HCT116 (cell line): ENCODE measurements at regions of chr3 and their contacts with region 1.

Region 1: GRCh38 chr3:109532257-109533216 is 195.2 kb upstream of the DPPA4 start:
- DNase-seq: peak; percentile 72
- ATAC-seq: peak; percentile 95
- H3K4me3 ChIP-seq: no peak overlapping the region
- H3K27ac ChIP-seq: no peak overlapping the region
- H3K4me1 ChIP-seq: no peaks in the 10 kb centered on the region
- H3K27me3 ChIP-seq: no peaks in the 10 kb centered on the region
- CTCF ChIP-seq: peak; percentile 41 to 70 (median 69); a peak in 5 of 6 replicates
- POLR2A ChIP-seq: no peak
- RAD21 ChIP-seq: peak; percentile 84

Region 2: GRCh38 chr3:109851854-109852253 is 319.3 kb after region 1 on chr3:
- CTCF ChIA-PET with region 1: no interaction called
- POLR2A ChIA-PET with region 1: no interaction called
- RAD21 ChIA-PET with region 1: no interaction called
- intact Hi-C with region 1: no loop called
- DNase-seq: no peak
- ATAC-seq: no peak
- H3K4me3 ChIP-seq: no peak overlapping the region
- H3K27ac ChIP-seq: no peak overlapping the region
- H3K4me1 ChIP-seq: no peaks in the 10 kb centered on the region
- H3K27me3 ChIP-seq: no peaks in the 10 kb centered on the region
- CTCF ChIP-seq: no peak
- POLR2A ChIP-seq: no peak
- RAD21 ChIP-seq: no peak

Region 3: GRCh38 chr3:110314512-110315114 is 782.1 kb after region 1 on chr3:
- CTCF ChIA-PET with region 1: interaction called, 3 read pairs
- POLR2A ChIA-PET with region 1: no interaction called
- RAD21 ChIA-PET with region 1: interaction called in 1 of 2 experiments, 5 read pairs
- intact Hi-C with region 1: loop called (anchors 1 kb)
- DNase-seq: peak; percentile 72
- ATAC-seq: peak; percentile 88
- H3K4me3 ChIP-seq: no peak overlapping the region
- H3K27ac ChIP-seq: no peak overlapping the region
- H3K4me1 ChIP-seq: peaks cover 0 to 8% of the 10 kb centered on the region in 2 experiments; a peak in 1 of 4 replicates
- H3K27me3 ChIP-seq: no peaks in the 10 kb centered on the region
- CTCF ChIP-seq: peak; percentile 36 to 75 (median 74); a peak in 5 of 6 replicates
- POLR2A ChIP-seq: no peak
- RAD21 ChIP-seq: peak; percentile 67

Region 4: DNA sequence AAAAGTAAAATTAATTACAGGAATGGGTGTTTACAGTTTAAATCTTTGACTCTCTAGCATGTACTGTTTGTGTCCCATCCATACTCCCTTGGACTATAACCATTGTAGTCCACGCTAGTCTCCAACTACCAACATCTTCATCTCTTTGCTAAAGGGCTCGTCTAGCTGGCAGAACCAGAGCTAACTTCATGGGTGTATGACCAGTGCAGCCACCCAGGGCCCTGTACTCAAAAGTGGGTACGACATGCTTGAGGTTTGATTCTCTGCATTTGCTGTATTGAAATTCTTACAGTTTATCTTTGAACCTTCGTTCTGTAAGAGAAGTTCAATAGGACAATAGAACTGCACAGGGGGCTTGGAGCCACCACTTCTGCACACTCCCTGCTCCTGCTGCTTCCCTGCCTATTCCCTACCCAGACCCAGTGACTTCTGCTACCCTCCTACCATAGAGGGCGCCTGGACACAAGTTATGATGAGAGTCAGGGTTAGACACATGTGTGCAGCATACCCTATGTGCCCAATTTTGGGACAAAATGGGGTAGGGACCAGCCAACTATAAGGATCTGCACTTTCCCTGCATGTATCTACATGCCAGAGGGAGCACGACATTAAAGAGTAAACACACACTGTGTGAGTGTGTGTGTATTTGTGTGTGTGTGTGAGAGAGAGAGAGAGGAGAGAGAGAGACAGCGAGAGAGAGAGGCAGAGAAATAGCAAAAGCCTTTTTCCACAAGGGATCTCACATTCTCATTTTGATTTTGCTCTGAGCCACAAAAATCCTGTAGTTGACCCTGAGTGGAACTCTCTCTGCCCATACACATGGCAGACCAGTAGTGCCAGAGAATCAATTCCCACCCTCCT is 1480.1 kb after region 1 on chr3:
- CTCF ChIA-PET with region 1: no interaction called
- POLR2A ChIA-PET with region 1: no interaction called
- RAD21 ChIA-PET with region 1: no interaction called
- intact Hi-C with region 1: loop called (anchors 10 kb)
- DNase-seq: peak; percentile 39
- ATAC-seq: peak; percentile 100
- H3K4me3 ChIP-seq: no peak overlapping the region
- H3K27ac ChIP-seq: no peak overlapping the region
- H3K4me1 ChIP-seq: 0 out of 4 replicates have a peak, but pooled peaks cover 0 to 6% of the 10 kb centered on the region in 2 experiments
- H3K27me3 ChIP-seq: no peaks in the 10 kb centered on the region
- CTCF ChIP-seq: peak; percentile 39 to 58 (median 49); a peak in 5 of 6 replicates
- POLR2A ChIP-seq: no peak
- RAD21 ChIP-seq: peak; percentile 79

Region 5: GRCh38 chr3:111080413-111080812 is 1547.9 kb after region 1 on chr3:
- CTCF ChIA-PET with region 1: interaction called, 4 read pairs
- POLR2A ChIA-PET with region 1: no interaction called
- RAD21 ChIA-PET with region 1: no interaction called
- intact Hi-C with region 1: loop called (anchors 1 kb)
- DNase-seq: no peak
- ATAC-seq: no peak
- H3K4me3 ChIP-seq: no peak overlapping the region
- H3K27ac ChIP-seq: no peak overlapping the region
- H3K4me1 ChIP-seq: peaks cover 40 to 77% of the 10 kb centered on the region in 2 experiments; a peak in 3 of 4 replicates
- H3K27me3 ChIP-seq: no peaks in the 10 kb centered on the region
- CTCF ChIP-seq: peak; percentile 23 to 56 (median 48); a peak in 5 of 6 replicates
- POLR2A ChIP-seq: no peak
- RAD21 ChIP-seq: peak; percentile 65

Region 6: DNA sequence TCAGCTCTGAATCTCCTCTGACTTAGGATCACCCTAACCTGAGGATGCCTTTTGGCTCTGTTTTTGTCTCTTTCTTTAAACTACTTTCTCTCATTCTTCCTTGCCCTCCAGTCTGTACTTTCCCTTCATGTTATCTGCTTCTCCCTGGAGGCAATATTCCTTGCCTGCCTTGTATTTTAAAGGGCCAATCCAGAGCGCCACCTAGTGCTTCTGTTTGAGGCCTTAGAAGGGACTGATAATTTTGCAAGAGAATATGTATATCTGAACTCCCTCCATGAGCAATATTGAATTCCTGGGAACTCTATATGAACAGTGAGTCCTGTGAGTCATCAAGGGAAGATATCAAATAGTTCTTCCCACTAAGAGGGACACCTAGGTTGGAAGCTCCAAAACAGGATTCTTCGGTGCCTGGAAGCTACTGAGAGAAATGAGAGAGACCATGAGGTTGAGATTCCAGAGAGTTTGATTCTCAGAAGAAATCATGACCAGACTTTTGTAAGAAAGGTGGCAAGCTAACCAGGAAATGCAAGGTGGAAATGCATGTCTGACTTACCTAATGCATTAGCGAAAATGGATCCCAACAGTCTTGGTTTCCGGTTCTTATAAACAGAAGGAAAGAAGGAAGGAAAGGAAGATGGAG is 1805.6 kb after region 1 on chr3:
- CTCF ChIA-PET with region 1: no interaction called
- POLR2A ChIA-PET with region 1: no interaction called
- RAD21 ChIA-PET with region 1: no interaction called
- intact Hi-C with region 1: loop called (anchors 2 kb)
- DNase-seq: peak; percentile 66
- ATAC-seq: peak; percentile 95
- H3K4me3 ChIP-seq: no peak overlapping the region
- H3K27ac ChIP-seq: no peak overlapping the region
- H3K4me1 ChIP-seq: peaks cover 0 to 18% of the 10 kb centered on the region in 2 experiments; a peak in 2 of 4 replicates
- H3K27me3 ChIP-seq: no peaks in the 10 kb centered on the region
- CTCF ChIP-seq: peak; percentile 72 to 92 (median 83); a peak in 5 of 6 replicates
- POLR2A ChIP-seq: no peak
- RAD21 ChIP-seq: peak; percentile 92